Caco-2 (cell line): ENCODE measurements at regions of chr17 and their contacts with region 1.

Region 1: DNA sequence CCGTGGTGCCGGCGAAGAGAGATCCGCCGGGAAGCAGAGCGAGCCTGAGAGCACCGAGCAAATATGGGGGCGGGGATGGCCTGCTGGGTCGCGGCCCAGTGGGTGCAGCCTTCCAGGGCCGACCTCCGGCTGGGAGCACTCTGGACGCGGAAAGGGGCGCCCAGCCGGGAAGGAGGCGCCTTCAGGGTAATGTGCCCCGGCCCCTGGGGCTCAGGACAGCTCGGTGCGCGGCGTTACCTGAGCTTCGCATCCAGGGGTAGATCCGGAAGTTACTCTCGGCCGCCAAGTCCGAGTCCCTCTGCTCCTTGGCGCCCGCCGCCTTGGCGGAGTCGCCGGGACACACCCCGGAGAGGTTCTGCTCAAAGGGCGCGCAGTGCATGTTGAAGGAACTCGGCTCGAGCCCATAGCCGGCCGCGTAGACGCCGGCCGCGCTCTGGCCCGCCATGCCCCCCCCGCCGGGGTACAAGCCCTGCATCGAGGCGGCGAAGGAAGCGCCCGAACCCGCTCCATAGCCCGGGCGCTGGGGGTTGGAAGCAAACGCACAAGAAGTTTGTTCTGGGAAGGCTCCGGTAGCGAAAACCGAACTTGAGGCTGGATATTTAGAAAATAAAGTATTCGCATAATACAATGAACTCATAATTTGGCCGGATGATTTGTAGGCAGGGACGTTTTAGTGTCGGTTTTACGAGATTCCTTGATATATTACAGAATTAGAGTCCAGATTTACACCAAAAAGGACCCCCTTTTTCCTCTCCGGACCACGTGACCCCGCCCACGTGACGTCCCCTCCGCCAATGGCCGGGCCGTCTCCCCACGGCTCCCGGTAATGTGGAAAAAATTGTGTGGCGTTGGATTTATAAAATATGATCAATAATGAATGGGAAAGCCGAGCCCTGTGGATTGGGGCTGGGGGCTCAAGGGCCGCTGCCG is at the start of gene HOXB7:
- DNase-seq: peak; percentile 88 to 92
- H3K4me3 ChIP-seq: peak within 1 kb of the TSS; percentile 70
- H3K4me3 Mint-ChIP-seq: peak within 1 kb of the TSS; percentile 86
- H3K27ac Mint-ChIP-seq: peak within 1 kb of the TSS; percentile 72
- H3K4me1 ChIP-seq: peaks cover 9% of the 10 kb centered on the region
- H3K4me1 Mint-ChIP-seq: peaks cover 29% of the 10 kb centered on the region
- H3K27me3 ChIP-seq: no peaks in the 10 kb centered on the region
- H3K27me3 Mint-ChIP-seq: peaks cover 31% of the 10 kb centered on the region
- CTCF ChIP-seq: no peak
- total RNA-seq, gene HOXB7: 23.7 and 28.2 TPM in 2 replicates

Region 2: GRCh38 chr17:48153691-48154358 is 456.7 kb before region 1 on chr17:
- CTCF ChIA-PET with region 1: no interaction called
- POLR2A ChIA-PET with region 1: no interaction called
- intact Hi-C with region 1: loop called (anchors 2 kb)
- DNase-seq: peak; percentile 80 to 88
- H3K4me3 ChIP-seq: no peak overlapping the region
- H3K4me3 Mint-ChIP-seq: peak overlapping the region; percentile 28
- H3K27ac Mint-ChIP-seq: no peak overlapping the region
- H3K4me1 ChIP-seq: peaks cover 10% of the 10 kb centered on the region
- H3K4me1 Mint-ChIP-seq: peaks cover 14% of the 10 kb centered on the region
- H3K27me3 ChIP-seq: peaks cover 2% of the 10 kb centered on the region; the same call in 1 of the 2 replicates
- H3K27me3 Mint-ChIP-seq: peaks cover 15% of the 10 kb centered on the region
- CTCF ChIP-seq: peak; percentile 88 to 93

Region 3: DNA sequence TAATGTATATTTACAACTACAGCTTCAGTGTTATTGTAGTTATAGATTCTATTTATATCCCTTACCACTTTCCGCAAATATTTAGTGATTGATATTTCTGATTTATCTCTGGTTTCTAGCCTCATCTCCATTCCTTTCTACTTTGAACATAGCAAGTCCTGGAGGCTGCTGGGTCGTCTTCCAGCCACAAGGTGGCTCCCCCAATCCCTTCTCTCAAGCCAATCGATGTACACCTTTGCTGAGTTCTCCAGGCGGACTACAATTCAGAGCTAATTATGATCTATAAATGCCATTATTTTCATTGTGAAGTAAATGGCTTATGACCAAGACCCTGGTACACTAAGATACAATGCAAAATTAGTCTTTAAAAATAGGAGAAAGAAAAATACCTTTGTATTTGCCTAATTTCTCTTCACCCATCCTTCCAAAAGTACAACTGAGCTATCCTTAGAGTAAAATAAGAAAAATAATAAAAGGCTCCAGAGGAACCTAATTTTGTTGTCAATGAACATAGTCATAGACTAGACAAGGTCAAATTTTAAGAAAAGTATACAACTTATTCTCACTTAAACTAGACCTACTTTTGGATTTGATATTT is 302.6 kb before region 1 on chr17:
- CTCF ChIA-PET with region 1: interaction called, 11 read pairs
- POLR2A ChIA-PET with region 1: no interaction called
- intact Hi-C with region 1: no loop called
- DNase-seq: peak; percentile 83
- H3K4me3 ChIP-seq: no peak overlapping the region
- H3K4me3 Mint-ChIP-seq: no peak overlapping the region
- H3K27ac Mint-ChIP-seq: no peak overlapping the region
- H3K4me1 ChIP-seq: peaks cover 15% of the 10 kb centered on the region
- H3K4me1 Mint-ChIP-seq: peaks cover 14% of the 10 kb centered on the region
- H3K27me3 ChIP-seq: no peaks in the 10 kb centered on the region
- H3K27me3 Mint-ChIP-seq: peaks cover 16% of the 10 kb centered on the region
- CTCF ChIP-seq: peak; percentile 99 to 100

Region 4: DNA sequence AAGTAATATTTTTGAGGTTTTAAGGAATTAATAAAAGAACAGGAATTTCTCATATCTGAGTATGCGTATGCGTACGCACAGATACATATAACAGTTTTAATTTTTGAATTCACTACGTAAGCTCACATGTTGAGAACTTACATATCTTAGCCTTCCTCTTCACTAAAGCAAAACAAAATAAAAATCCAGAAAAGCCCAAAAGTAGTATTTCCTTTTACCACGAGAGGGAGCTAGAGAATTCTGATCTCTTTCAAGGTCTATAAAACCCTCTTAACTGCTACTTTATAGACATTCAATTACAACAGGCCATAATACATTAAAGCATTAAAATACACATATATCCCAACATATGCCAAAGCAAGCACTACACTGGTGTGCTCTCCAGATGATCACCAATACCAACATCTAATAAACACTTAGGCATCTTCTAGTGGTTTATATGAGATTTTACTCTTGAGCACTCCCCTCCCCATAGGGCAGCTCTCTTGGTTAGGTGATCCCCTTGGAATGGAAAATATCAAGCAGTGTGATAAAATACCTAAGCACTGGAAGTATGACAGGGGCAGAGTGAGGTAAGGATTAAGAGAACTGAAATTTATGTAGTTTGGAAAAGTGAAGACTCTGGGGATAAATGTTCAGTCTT is 274.6 kb before region 1 on chr17:
- CTCF ChIA-PET with region 1: interaction called, 11 read pairs
- POLR2A ChIA-PET with region 1: interaction called, 6 read pairs
- intact Hi-C with region 1: no loop called
- DNase-seq: peak in 1 of 2 experiments; percentile 79
- H3K4me3 ChIP-seq: no peak overlapping the region
- H3K4me3 Mint-ChIP-seq: no peak overlapping the region
- H3K27ac Mint-ChIP-seq: no peak overlapping the region
- H3K4me1 ChIP-seq: no peaks in the 10 kb centered on the region
- H3K4me1 Mint-ChIP-seq: no peaks in the 10 kb centered on the region
- H3K27me3 ChIP-seq: no peaks in the 10 kb centered on the region; the same call in 1 of the 2 replicates
- H3K27me3 Mint-ChIP-seq: peaks cover 18% of the 10 kb centered on the region
- CTCF ChIP-seq: peak; percentile 90 to 96

Region 5: DNA sequence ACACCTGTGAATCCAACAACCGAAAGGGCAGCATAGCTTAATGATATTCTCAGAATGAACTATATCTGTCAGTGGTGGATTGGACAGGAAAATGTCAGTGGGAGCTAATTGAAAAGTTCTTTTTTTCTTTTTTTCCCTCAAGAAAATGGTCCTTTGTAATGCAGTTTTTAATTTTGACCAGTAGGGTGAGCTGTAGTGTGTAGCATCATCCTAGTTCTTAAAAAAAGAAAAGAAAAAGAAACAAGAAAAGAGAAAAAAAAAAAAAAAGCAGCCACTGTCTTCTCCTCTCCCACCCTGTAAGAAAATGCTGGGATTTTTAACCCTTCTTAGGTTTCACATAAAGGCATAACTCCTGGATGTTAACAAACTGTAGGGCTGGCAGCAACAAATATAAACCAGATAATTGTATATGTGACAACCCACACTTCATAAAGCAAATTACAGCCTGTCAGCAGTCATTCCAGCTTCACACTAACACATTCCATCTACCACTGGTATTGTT is 258.7 kb before region 1 on chr17:
- CTCF ChIA-PET with region 1: interaction called, 13 read pairs
- POLR2A ChIA-PET with region 1: no interaction called
- intact Hi-C with region 1: no loop called
- DNase-seq: peak in 1 of 2 experiments; percentile 56
- H3K4me3 ChIP-seq: no peak overlapping the region
- H3K4me3 Mint-ChIP-seq: no peak overlapping the region
- H3K27ac Mint-ChIP-seq: no peak overlapping the region
- H3K4me1 ChIP-seq: no peaks in the 10 kb centered on the region
- H3K4me1 Mint-ChIP-seq: no peaks in the 10 kb centered on the region
- H3K27me3 ChIP-seq: no peaks in the 10 kb centered on the region; the same call in 1 of the 2 replicates
- H3K27me3 Mint-ChIP-seq: peaks cover 8% of the 10 kb centered on the region
- CTCF ChIP-seq: peak; percentile 90

Region 6: DNA sequence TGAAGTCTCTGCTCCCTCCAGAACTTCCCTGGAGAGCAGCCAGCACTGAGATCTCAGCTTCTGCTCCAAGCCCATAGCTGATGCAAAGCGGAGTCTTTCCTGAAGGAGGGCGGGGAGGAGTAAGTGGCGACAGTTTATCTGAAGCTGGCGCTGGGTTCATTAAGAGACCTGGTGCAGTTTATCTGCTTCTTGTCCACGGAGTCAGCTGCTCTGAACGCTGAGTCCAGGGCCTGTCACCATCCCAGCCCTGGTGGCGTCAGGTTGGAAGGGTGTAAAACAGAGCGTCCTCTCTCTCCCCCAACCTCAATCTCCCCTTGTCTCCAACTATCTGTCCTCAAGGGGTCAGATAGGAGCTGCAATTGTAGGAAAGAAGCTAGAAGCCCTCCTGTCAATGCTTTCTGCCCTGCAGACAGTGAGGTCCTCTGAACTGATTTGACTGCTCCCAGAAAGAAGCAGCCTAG is 109.6 kb before region 1 on chr17:
- CTCF ChIA-PET with region 1: interaction called, 6 read pairs
- POLR2A ChIA-PET with region 1: interaction called, 4 read pairs
- intact Hi-C with region 1: loop called (anchors 1 kb)
- DNase-seq: peak in 1 of 2 experiments; percentile 48
- H3K4me3 ChIP-seq: no peak overlapping the region
- H3K4me3 Mint-ChIP-seq: no peak overlapping the region
- H3K27ac Mint-ChIP-seq: no peak overlapping the region
- H3K4me1 ChIP-seq: peaks cover 39% of the 10 kb centered on the region
- H3K4me1 Mint-ChIP-seq: peaks cover 46% of the 10 kb centered on the region
- H3K27me3 ChIP-seq: no peaks in the 10 kb centered on the region
- H3K27me3 Mint-ChIP-seq: peaks cover 3% of the 10 kb centered on the region
- CTCF ChIP-seq: peak; percentile 22 to 62

Region 7: DNA sequence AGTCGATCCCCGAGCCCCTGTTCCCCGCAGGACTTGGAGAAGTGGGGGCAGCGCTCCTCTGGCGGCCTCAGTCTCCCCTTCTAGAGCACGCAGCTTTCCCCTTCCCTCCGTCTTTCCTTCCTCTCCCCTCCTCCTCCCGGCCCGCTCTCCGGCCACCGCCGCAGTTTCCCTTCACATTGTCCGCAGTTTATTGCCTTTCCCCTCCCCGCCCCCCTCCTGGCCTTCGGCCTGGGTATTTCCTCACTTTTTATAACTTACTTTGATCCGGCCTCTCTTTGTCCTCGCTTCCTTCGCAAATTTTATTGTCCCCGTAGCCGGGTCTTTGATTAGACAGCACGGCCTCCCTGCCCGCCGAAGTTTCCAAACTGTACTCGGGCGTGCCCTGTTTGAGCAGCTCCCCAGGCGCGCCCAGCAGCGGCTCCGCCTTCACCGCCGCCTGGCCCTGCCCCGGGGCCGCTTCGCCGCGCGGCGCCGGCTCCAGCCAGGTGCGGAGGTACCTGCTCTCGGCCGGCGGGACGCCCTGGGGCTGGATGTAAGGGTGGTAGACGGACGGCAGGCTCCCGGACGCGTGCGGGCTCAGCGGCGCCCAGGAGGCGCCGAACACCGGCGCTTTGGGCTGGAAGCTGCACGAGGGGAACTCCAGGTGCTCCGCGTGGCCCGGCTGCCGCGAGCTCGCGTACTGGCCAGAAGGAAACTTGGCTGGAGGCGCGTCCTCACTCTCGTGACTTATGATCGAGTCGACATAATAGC is 15.1 kb after region 1 on chr17:
- CTCF ChIA-PET with region 1: interaction called, 9 read pairs
- POLR2A ChIA-PET with region 1: interaction called, 10 read pairs
- intact Hi-C with region 1: no loop called
- DNase-seq: peak; percentile 90 to 92
- H3K4me3 ChIP-seq: peak overlapping the region; percentile 57
- H3K4me3 Mint-ChIP-seq: peak overlapping the region; percentile 85
- H3K27ac Mint-ChIP-seq: peak overlapping the region; percentile 33
- H3K4me1 ChIP-seq: peaks cover 13% of the 10 kb centered on the region
- H3K4me1 Mint-ChIP-seq: peaks cover 8% of the 10 kb centered on the region
- H3K27me3 ChIP-seq: peaks cover 30% of the 10 kb centered on the region
- H3K27me3 Mint-ChIP-seq: peaks cover 56% of the 10 kb centered on the region
- CTCF ChIP-seq: peak in 1 of 2 experiments; percentile 0